Natural killer cell (primary cell): ENCODE measurements at regions of chr2 and their contacts with region 1.

Region 1: DNA sequence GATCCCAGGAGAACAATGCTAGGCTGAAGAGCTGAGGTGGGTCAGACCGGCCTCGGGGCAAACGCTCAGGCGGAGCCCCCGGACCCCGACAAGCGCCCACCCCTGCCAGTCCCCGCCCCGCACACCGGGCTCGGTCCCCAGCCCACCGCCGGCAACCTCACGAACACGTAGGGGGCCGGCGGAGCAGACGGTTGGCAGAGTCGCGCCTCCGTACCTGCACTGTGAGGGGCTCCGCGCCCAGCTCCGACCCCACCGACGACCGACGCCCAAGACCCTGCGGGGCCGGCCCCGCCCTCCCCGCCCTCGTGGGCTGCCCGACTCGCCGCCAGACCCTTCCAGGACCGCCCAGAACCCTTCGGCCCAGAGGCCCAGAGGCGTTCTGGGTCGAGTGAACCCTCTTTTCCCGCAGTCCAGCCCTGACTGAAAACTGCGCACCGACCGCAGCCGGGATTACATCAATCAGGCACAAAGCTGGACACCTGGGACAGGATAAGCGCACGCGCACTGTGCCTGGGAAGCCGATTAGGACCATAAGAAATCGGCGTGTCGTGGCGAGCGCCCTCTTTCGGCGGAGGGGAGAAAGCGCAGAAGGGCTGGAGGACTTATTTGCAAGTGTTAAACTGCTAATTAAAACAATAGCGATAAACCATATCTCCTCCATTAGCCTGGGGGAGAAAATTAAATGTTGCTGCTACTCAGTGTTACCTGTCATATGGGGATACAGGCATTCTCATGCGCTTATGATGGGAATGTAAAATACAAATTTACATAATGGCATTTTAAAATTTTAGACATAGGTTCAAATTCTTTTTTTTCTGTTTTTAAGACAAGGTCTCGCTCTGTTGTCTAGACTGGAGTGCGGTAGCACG is 11.7 kb upstream of the DCTN1 start:
- DNase-seq: peak; percentile 96 to 98
- ATAC-seq: peak; percentile 93 to 96 (median 94)
- H3K4me3 ChIP-seq: peak overlapping the region; percentile 66
- H3K4me3 Mint-ChIP-seq: peak overlapping the region; percentile 94
- H3K27ac ChIP-seq: peak overlapping the region; percentile 96
- H3K27ac Mint-ChIP-seq: peak overlapping the region; percentile 92 to 93
- H3K4me1 ChIP-seq: peaks cover 11% of the 10 kb centered on the region
- H3K4me1 Mint-ChIP-seq: peaks cover 5 to 6% of the 10 kb centered on the region in 2 donors
- H3K27me3 ChIP-seq: no peaks in the 10 kb centered on the region
- H3K27me3 Mint-ChIP-seq: peaks cover 0 to 6% of the 10 kb centered on the region in 2 donors
- CTCF ChIP-seq: peak; percentile 94

Region 2: DNA sequence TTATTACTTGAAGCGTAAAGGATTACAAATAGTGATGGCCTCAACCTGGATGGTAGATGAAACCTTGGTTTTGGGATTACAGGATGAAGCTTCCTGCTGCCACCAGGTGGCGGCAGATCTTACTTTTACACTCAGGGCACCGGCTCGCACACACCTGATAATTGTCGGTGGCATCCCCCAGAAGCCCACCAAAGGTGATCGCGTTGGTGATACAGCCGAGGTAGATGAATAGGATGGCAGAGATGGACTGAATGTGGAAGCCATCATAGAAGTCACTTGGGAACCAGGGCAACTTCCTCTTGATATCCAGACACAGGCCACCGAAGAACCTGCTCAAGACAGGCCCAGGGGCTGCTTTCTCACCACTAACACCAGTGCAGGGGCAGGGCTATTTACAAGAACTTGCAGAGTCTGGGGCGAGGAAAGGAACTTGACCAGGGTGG is 141.6 kb before region 1 on chr2:
- intact Hi-C with region 1: loop called (anchors 2 kb)
- DNase-seq: peak; percentile 46 to 83
- ATAC-seq: peak in 2 of 3 donors; percentile 63 to 68
- H3K4me3 ChIP-seq: no peak overlapping the region
- H3K4me3 Mint-ChIP-seq: no peak overlapping the region
- H3K27ac ChIP-seq: no peak overlapping the region
- H3K27ac Mint-ChIP-seq: no peak overlapping the region
- H3K4me1 ChIP-seq: peaks cover 5% of the 10 kb centered on the region
- H3K4me1 Mint-ChIP-seq: peaks cover 0 to 3% of the 10 kb centered on the region in 2 donors
- H3K27me3 ChIP-seq: no peaks in the 10 kb centered on the region
- H3K27me3 Mint-ChIP-seq: no peaks in the 10 kb centered on the region
- CTCF ChIP-seq: peak; percentile 81

Region 3: GRCh38 chr2:74421221-74421870 is 29.5 kb after region 1 on chr2 and contains the starts of genes C2orf81 and WDR54:
- intact Hi-C with region 1: loop called (anchors 1 kb)
- DNase-seq: peak; percentile 95 to 97
- ATAC-seq: peak; percentile 90 to 96 (median 94)
- H3K4me3 ChIP-seq: peak within 1 kb of the TSS; percentile 79
- H3K4me3 Mint-ChIP-seq: peak within 1 kb of the TSS; percentile 99
- H3K27ac ChIP-seq: peak within 1 kb of the TSS; percentile 99
- H3K27ac Mint-ChIP-seq: peak within 1 kb of the TSS; percentile 94 to 96
- H3K4me1 ChIP-seq: peaks cover 16% of the 10 kb centered on the region
- H3K4me1 Mint-ChIP-seq: peaks cover 20 to 28% of the 10 kb centered on the region in 2 donors
- H3K27me3 ChIP-seq: no peaks in the 10 kb centered on the region
- H3K27me3 Mint-ChIP-seq: peaks cover 0 to under 1% of the 10 kb centered on the region in 2 donors
- CTCF ChIP-seq: no peak
- total RNA-seq, gene C2orf81: 1.7 to 3.2 (median 1.7) TPM
- total RNA-seq, gene WDR54: 28.0 to 35.3 (median 28.0) TPM